Heart left ventricle (tissue), 16 donors: ENCODE measurements at regions of chr18 and their contacts with region 1.

Region 1: GRCh38 chr18:6537475-6537874 is 122.8 kb upstream of the L3MBTL4 start:
- DNase-seq: no peak
- ATAC-seq: no peak
- H3K4me3 ChIP-seq: peak overlapping the region in 1 of 12 donors; percentile 19
- H3K27ac ChIP-seq: no peak overlapping the region
- H3K4me1 ChIP-seq: no peaks in the 10 kb centered on the region
- H3K27me3 ChIP-seq: no peaks in the 10 kb centered on the region
- CTCF ChIP-seq: no peak
- POLR2A ChIP-seq: no peak

Region 2: GRCh38 chr18:6476190-6476589 is 61.3 kb before region 1 on chr18:
- intact Hi-C with region 1: loop called in 1 of 10 experiments (anchors 10 kb)
- DNase-seq: no peak
- ATAC-seq: no peak
- H3K4me3 ChIP-seq: no peak overlapping the region
- H3K27ac ChIP-seq: no peak overlapping the region
- H3K4me1 ChIP-seq: peaks cover 0 to 11% (median 0%) of the 10 kb centered on the region in 12 donors
- H3K27me3 ChIP-seq: no peaks in the 10 kb centered on the region
- CTCF ChIP-seq: no peak
- POLR2A ChIP-seq: no peak

Region 3: DNA sequence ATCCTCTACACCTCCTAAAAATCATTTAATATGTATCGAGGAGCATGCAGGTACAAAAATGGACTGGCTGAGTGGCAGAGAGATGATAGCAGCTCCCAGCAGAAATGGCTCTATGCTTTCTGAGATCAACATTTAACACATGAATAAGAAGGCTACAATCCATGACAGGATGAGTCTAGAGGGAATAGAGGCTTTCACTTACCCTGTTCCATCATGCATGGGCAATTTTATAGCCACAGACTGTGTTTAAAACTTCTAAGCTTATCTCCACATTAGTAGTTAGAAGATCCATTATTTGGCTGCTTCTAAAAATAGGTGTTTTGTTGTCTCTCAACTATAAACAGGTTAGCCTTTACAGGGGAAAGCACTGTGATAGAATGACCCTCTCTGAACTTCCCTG is 42.9 kb after region 1 on chr18:
- intact Hi-C with region 1: no loop called
- DNase-seq: no peak
- ATAC-seq: no peak
- H3K4me3 ChIP-seq: no peak overlapping the region
- H3K27ac ChIP-seq: no peak overlapping the region
- H3K4me1 ChIP-seq: no peaks in the 10 kb centered on the region
- H3K27me3 ChIP-seq: no peaks in the 10 kb centered on the region
- CTCF ChIP-seq: no peak
- POLR2A ChIP-seq: no peak